Mucosa of descending colon (tissue), 3 donors: ENCODE measurements at regions of chr3 and their contacts with region 1.

Region 1: GRCh38 chr3:158532099-158532734 is 38.8 kb upstream of the MLF1 start:
- DNase-seq: peak in 1 of 3 donors; percentile 13
- ATAC-seq: no peak
- H3K4me3 ChIP-seq: no peak overlapping the region
- H3K4me1 ChIP-seq: no peaks in the 10 kb centered on the region
- CTCF ChIP-seq: no peak

Region 2: DNA sequence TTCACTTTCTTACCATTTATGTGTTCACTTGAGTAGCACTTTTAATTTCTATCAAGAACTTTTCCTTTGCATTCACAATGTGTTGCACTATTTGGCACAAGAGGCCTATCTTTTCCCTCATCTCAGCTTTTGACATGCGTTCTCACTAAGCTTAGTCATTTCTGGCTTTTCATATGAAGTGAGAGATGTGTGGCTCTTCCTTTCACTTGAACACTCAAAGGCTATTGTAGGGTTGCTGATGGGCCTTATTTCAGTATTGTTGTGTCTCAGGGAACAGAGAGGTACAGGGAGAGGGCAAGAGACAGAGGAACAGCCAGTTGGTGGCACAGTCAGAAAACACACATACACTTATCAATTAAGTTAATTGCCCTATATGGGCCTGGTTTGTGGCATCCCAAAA is 88.6 kb before region 1 on chr3:
- intact Hi-C with region 1: loop called in 1 of 2 experiments (anchors 5 kb)
- DNase-seq: no peak
- ATAC-seq: no peak
- H3K4me3 ChIP-seq: no peak overlapping the region
- H3K4me1 ChIP-seq: no peaks in the 10 kb centered on the region
- CTCF ChIP-seq: no peak

Region 3: GRCh38 chr3:158465074-158465473 is 67.1 kb before region 1 on chr3:
- intact Hi-C with region 1: no loop called
- DNase-seq: peak in 1 of 3 donors; percentile 13
- ATAC-seq: no peak
- H3K4me3 ChIP-seq: no peak overlapping the region
- H3K4me1 ChIP-seq: no peaks in the 10 kb centered on the region
- CTCF ChIP-seq: no peak